Mammary epithelial cell (primary cell): ENCODE measurements at regions of chr19 and their contacts with region 1.

Region 1: GRCh38 chr19:29714953-29715700 is at the start of gene C19orf12:
- DNase-seq: peak; percentile 38
- H3K4me3 ChIP-seq: peak within 1 kb of the TSS; percentile 81 to 97 (median 87)
- H3K27ac ChIP-seq: peak within 1 kb of the TSS; percentile 71
- H3K4me1 ChIP-seq: peaks cover 3% of the 10 kb centered on the region
- H3K27me3 ChIP-seq: no peaks in the 10 kb centered on the region
- CTCF ChIP-seq: no peak
- total RNA-seq, gene C19orf12: 19.6 to 24.5 TPM

Region 2: DNA sequence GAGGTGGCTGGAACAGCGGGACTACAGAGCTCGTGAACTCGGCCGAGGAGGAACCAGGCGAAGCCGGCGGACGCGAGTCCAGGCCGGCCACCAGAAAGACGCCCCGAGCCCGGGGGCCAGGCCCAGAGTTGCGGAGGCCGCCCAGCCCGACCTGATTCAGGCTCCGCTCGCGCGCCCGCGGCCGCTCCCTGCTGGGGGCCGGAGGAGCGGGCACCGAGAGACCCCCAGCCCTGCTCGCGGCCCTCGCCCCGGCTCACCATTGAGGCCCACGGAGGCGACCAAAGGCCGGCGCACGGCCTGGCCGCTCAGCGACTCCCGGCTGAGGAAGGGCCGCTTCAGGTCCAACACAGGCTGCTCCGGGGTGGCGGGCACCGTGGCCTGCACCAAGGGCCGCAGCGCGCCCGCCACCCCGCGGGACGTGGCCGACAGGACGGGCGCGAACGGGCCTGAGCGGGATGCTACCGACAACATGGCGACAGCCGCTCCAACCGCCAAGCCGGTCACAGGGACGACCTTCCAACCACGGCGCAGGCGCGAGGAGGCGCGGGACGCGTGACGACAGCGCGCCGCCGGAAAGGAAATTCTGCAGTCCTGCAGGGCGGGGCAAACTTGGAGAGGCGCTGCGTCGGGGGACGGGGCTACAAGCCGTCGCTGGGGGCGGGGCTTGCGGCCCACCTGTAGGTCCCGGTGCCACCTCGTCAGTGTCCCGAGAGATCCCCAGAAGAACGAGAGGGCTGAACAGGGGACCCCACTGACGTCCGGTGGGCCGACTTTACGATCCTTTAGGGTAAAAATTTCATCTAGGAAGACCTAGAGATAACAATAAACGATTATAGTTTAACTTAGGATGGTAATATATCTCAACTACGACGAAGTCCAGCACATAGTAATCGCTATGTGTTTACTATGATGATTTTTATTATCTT is 502.2 kb before region 1 on chr19 and contains the start of gene UQCRFS1:
- CTCF ChIA-PET with region 1: no interaction called
- dilution Hi-C with region 1: no loop called
- in situ Hi-C with region 1: no loop called
- intact Hi-C with region 1: loop called (anchors 10 kb)
- DNase-seq: peak; percentile 86
- H3K4me3 ChIP-seq: peak within 1 kb of the TSS; percentile 75 to 81 (median 76)
- H3K27ac ChIP-seq: peak within 1 kb of the TSS; percentile 81
- H3K4me1 ChIP-seq: no peaks in the 10 kb centered on the region
- H3K27me3 ChIP-seq: no peaks in the 10 kb centered on the region
- CTCF ChIP-seq: peak in 1 of 2 donors; percentile 2
- total RNA-seq, gene UQCRFS1: 27.0 to 35.3 TPM

Region 3: GRCh38 chr19:29528350-29528945 is 186.7 kb before region 1 on chr19:
- CTCF ChIA-PET with region 1: no interaction called
- dilution Hi-C with region 1: loop called (anchors 10 kb)
- in situ Hi-C with region 1: no loop called
- intact Hi-C with region 1: no loop called
- DNase-seq: peak; percentile 55
- H3K4me3 ChIP-seq: peak overlapping the region in 1 of 3 experiments; percentile 6
- H3K27ac ChIP-seq: no peak overlapping the region
- H3K4me1 ChIP-seq: peaks cover 7% of the 10 kb centered on the region
- H3K27me3 ChIP-seq: peaks cover 58% of the 10 kb centered on the region
- CTCF ChIP-seq: peak; percentile 50 to 64

Region 4: GRCh38 chr19:29560313-29561075 is 154.6 kb before region 1 on chr19:
- CTCF ChIA-PET with region 1: no interaction called
- dilution Hi-C with region 1: no loop called
- in situ Hi-C with region 1: no loop called
- intact Hi-C with region 1: no loop called
- DNase-seq: no peak
- H3K4me3 ChIP-seq: no peak overlapping the region
- H3K27ac ChIP-seq: no peak overlapping the region
- H3K4me1 ChIP-seq: no peaks in the 10 kb centered on the region
- H3K27me3 ChIP-seq: no peaks in the 10 kb centered on the region
- CTCF ChIP-seq: no peak

Region 5: GRCh38 chr19:29665215-29665825 is 49.8 kb before region 1 on chr19 and contains the start of gene PLEKHF1:
- CTCF ChIA-PET with region 1: no interaction called
- dilution Hi-C with region 1: no loop called
- in situ Hi-C with region 1: no loop called
- intact Hi-C with region 1: loop called (anchors 2 kb)
- DNase-seq: peak; percentile 78
- H3K4me3 ChIP-seq: peak within 1 kb of the TSS; percentile 76 to 79 (median 79)
- H3K27ac ChIP-seq: peak within 1 kb of the TSS; percentile 72
- H3K4me1 ChIP-seq: peaks cover 58% of the 10 kb centered on the region
- H3K27me3 ChIP-seq: no peaks in the 10 kb centered on the region
- CTCF ChIP-seq: no peak
- total RNA-seq, gene PLEKHF1: 20.6 to 31.2 TPM

Region 6: DNA sequence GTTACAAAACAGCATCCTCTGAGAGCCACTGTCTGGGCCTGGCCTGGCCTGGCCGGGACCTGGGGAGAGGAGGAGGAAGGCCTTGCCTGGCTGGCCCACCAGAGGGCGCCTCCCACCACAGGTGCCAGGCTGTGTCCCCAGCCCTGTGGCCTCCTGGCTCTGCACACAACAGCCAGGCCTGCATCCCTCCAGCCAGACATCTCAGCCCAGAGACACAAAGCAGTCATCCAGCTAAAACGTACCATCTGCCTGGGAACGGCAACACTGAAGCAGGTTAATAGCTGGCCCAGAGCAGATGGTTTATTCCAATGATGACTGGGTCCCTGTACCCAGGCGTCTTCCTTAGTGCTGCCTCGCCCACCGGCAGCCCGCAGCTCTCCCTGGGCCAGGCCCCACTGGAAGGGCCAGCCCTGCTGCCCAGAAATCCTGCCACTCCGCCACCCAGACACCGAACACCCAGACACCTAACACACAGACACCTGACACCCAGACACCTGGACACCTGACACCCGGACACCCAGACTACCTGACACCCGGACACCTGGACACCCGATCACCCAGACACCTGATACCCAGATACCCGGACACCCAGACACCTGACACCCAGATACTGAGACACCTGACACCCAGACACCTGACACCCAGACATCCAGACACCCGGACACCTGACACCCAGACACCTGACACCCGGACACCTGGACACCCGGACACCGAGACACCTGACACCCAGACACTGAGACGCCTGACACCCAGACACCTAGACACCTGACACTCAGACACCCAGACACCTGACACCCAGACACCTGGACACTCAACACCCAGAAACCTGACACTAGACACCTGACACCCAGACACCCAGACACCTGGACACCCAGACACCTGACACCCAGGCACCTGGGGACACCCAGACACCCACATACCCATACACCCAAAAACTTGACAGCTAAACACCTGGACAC is 20.2 kb before region 1 on chr19:
- CTCF ChIA-PET with region 1: interaction called, 3 read pairs
- dilution Hi-C with region 1: no loop called
- in situ Hi-C with region 1: no loop called
- intact Hi-C with region 1: loop called (anchors 1 kb)
- DNase-seq: peak; percentile 26
- H3K4me3 ChIP-seq: no peak overlapping the region
- H3K27ac ChIP-seq: no peak overlapping the region
- H3K4me1 ChIP-seq: no peaks in the 10 kb centered on the region
- H3K27me3 ChIP-seq: no peaks in the 10 kb centered on the region
- CTCF ChIP-seq: peak; percentile 75 to 84

Region 7: GRCh38 chr19:29936409-29936808 is 221.3 kb after region 1 on chr19:
- CTCF ChIA-PET with region 1: no interaction called
- dilution Hi-C with region 1: loop called (anchors 10 kb)
- in situ Hi-C with region 1: no loop called
- intact Hi-C with region 1: no loop called
- DNase-seq: no peak
- H3K4me3 ChIP-seq: no peak overlapping the region
- H3K27ac ChIP-seq: no peak overlapping the region
- H3K4me1 ChIP-seq: no peaks in the 10 kb centered on the region
- H3K27me3 ChIP-seq: no peaks in the 10 kb centered on the region
- CTCF ChIP-seq: no peak